Ovary (tissue), 10 donors: ENCODE measurements at regions of chr1 and their contacts with region 1.

Region 1: DNA sequence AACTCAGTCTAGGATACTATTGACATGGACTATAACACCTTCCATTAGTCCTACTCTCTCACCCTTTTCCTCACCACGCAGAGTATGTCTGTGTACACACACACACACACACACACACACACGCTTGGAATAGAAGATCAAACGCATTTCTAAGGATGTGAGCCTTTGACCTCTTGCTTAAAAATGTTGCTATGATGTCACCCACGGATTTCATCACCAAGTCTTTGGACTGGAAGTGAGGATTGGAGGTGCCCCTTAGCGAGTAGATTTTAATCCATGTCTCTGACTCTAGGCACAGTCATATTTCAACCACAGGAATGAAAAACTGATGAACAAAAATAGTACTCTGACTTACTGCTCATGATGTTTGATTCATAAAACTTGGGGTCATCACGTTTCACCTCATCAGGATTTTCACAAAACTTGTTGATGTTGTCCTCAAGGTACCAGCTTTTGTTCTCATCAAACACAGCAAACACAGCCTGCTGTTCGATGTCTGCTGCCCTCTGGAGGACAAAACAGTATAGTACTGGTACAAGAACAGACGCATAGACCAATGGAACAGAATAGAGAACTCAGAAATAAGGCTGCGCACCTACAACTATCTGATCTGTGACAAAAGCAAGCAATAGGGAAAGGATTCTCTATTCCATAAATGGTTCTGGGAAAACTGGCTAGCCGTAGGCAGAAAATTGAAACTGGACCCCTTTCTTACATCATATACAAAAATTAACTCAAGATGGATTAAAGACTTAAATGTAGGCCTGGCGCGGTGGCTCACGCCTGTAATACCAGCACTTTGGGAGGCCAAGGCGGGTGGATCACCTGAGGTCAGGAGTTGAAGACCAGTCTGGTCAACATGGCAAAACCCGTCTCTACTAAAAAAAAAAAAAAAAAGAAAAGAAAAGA is 39.9 kb downstream of the F5 start:
- DNase-seq: peak; percentile 17 to 63 (median 31)
- H3K4me3 ChIP-seq: no peak overlapping the region
- H3K27ac ChIP-seq: no peak overlapping the region
- H3K4me1 ChIP-seq: no peaks in the 10 kb centered on the region
- H3K27me3 ChIP-seq: no peaks in the 10 kb centered on the region
- CTCF ChIP-seq: peak; percentile 42 to 76 (median 64)
- EP300 ChIP-seq: no peak
- POLR2A ChIP-seq: no peak

Region 2: GRCh38 chr1:169367486-169368405 is 178.6 kb before region 1 on chr1 and contains the starts of genes BLZF1 and NME7:
- intact Hi-C with region 1: loop called in 1 of 4 experiments (anchors 10 kb)
- DNase-seq: peak; percentile 93 to 97 (median 94)
- H3K4me3 ChIP-seq: peak within 1 kb of the TSS; percentile 73
- H3K27ac ChIP-seq: peak within 1 kb of the TSS; percentile 44 to 59
- H3K4me1 ChIP-seq: peaks cover 2% of the 10 kb centered on the region
- H3K27me3 ChIP-seq: no peaks in the 10 kb centered on the region
- CTCF ChIP-seq: no peak
- EP300 ChIP-seq: no peak
- POLR2A ChIP-seq: peak; percentile 36
- total RNA-seq, gene BLZF1: 11.7 to 28.8 (median 19.7) TPM
- total RNA-seq, gene NME7: 14.2 to 28.0 (median 18.4) TPM

Region 3: GRCh38 chr1:169414952-169415351 is 131.4 kb before region 1 on chr1:
- intact Hi-C with region 1: no loop called
- DNase-seq: no peak
- H3K4me3 ChIP-seq: no peak overlapping the region
- H3K27ac ChIP-seq: no peak overlapping the region
- H3K4me1 ChIP-seq: no peaks in the 10 kb centered on the region
- H3K27me3 ChIP-seq: no peaks in the 10 kb centered on the region
- CTCF ChIP-seq: no peak
- EP300 ChIP-seq: no peak
- POLR2A ChIP-seq: no peak

Region 4: GRCh38 chr1:169466259-169467230 is 79.8 kb before region 1 on chr1:
- intact Hi-C with region 1: loop called in 3 of 4 experiments (anchors 5 to 10 kb)
- DNase-seq: peak in 1 of 5 donors; percentile 47
- H3K4me3 ChIP-seq: no peak overlapping the region
- H3K27ac ChIP-seq: no peak overlapping the region
- H3K4me1 ChIP-seq: no peaks in the 10 kb centered on the region
- H3K27me3 ChIP-seq: no peaks in the 10 kb centered on the region
- CTCF ChIP-seq: peak in 2 of 3 donors; percentile 38 to 46
- EP300 ChIP-seq: no peak
- POLR2A ChIP-seq: no peak

Region 5: GRCh38 chr1:169753552-169753951 is 207.2 kb after region 1 on chr1:
- intact Hi-C with region 1: no loop called
- DNase-seq: no peak
- H3K4me3 ChIP-seq: no peak overlapping the region
- H3K27ac ChIP-seq: no peak overlapping the region
- H3K4me1 ChIP-seq: no peaks in the 10 kb centered on the region
- H3K27me3 ChIP-seq: no peaks in the 10 kb centered on the region
- CTCF ChIP-seq: no peak
- EP300 ChIP-seq: no peak
- POLR2A ChIP-seq: no peak